ENCODE measurements at regions of chr1 and their contacts with region 1.

Region 1: GRCh38 chr1:178310685-178311105 is 186.1 kb downstream of the CLEC20A start:
- DNase-seq: peak; percentile 32
- CTCF ChIP-seq: peak; percentile 55

Region 2: GRCh38 chr1:178294654-178295053 is 16.0 kb before region 1 on chr1:
- CTCF ChIA-PET with region 1: interaction called, 56 read pairs
- POLR2A ChIA-PET with region 1: no interaction called
- DNase-seq: no peak
- CTCF ChIP-seq: no peak

Region 3: GRCh38 chr1:178324003-178324402 is 13.3 kb after region 1 on chr1:
- CTCF ChIA-PET with region 1: interaction called, 11 read pairs
- POLR2A ChIA-PET with region 1: no interaction called
- DNase-seq: no peak
- CTCF ChIP-seq: no peak

Region 4: GRCh38 chr1:178607718-178608408 is 297.2 kb after region 1 on chr1:
- CTCF ChIA-PET with region 1: no interaction called
- POLR2A ChIA-PET with region 1: no interaction called
- DNase-seq: peak; percentile 33
- CTCF ChIP-seq: no peak

Measured in GM10248 (cell line).